ENCODE measurements at regions of chr2 and their contacts with region 1.

Region 1: GRCh38 chr2:29309090-29310029 is 194.1 kb downstream of the CLIP4 start:
- DNase-seq: no peak
- ATAC-seq: peak; percentile 98
- H3K4me3 ChIP-seq: no peak overlapping the region
- H3K27ac ChIP-seq: no peak overlapping the region
- H3K4me1 ChIP-seq: peaks cover 17% of the 10 kb centered on the region
- H3K27me3 ChIP-seq: no peaks in the 10 kb centered on the region
- CTCF ChIP-seq: peak; percentile 79 to 95 (median 83)
- EP300 ChIP-seq: no peak
- POLR2A ChIP-seq: no peak
- RAD21 ChIP-seq: peak; percentile 69

Region 2: DNA sequence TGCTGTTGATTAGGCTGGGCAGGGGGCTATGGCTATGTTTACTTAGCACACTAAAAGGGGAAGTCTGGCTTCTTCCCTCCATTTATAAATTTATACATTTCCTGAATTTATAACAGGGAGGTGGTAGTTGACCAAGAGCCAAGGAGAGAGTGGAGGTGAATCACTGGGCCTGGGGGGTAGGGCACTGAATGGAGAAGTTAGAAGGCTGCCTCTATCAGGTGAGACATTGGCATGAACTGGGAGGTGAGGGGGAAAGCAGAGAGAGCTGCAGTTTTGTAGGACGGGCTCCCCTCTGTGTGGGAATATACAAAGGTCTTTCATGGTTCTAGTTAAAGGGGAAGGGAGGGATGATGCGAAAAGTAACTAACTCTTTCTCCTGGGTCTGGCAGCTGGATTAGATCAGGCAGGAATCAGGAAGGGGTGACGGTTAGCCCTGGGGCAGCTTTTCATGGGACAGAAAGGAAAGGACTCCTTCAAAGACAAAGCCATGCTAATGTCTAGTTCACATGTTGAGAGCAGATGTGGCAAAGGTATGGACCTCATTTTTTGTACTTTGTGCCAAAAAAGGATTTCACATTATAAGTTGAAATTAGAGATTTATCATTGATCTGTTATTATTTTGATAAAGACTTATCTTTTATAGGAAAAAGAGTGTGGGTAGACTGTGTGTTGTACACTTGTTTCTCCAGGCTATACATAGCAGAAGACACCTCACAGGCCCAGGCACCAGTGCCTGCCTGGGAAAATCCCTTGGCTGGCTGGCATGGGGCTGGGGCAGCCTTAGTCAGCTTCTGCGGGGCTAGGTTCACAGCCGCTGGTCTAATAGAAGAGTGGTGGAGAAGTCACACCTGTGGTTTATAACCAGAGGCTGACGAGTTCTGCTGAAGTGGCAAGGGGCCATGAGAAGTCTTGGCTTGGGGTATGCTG is 35.4 kb before region 1 on chr2:
- CTCF ChIA-PET with region 1: no interaction called
- POLR2A ChIA-PET with region 1: no interaction called
- RAD21 ChIA-PET with region 1: no interaction called
- SMC1A ChIA-PET with region 1: no interaction called
- in situ Hi-C with region 1: no loop called
- intact Hi-C with region 1: no loop called
- DNase-seq: no peak
- ATAC-seq: no peak
- H3K4me3 ChIP-seq: no peak overlapping the region
- H3K27ac ChIP-seq: no peak overlapping the region
- H3K4me1 ChIP-seq: no peaks in the 10 kb centered on the region
- H3K27me3 ChIP-seq: peaks cover 4 to 5% of the 10 kb centered on the region in 2 experiments; a peak in 2 of 4 replicates
- CTCF ChIP-seq: no peak
- EP300 ChIP-seq: no peak
- POLR2A ChIP-seq: no peak
- RAD21 ChIP-seq: no peak

Region 3: DNA sequence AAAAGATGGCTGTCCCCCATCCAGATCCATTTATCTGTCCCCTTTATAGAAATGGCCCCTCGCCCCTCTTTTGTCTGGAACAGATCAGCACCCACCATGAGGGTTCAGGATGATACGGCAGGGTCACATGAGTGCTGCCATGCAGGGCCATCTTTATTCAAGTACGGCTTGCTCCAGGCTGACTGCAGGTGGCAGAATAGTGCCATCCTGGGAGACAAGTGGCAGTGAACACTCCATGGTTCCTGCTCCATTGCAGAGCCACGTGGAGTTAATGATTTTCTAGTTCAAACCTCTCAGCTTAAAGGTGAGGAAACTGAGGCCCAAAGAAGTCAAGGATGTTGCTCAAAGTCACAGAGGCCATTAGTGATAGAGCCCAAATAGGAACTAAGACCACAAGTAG is 13.5 kb before region 1 on chr2:
- CTCF ChIA-PET with region 1: interaction called, 12 read pairs
- POLR2A ChIA-PET with region 1: no interaction called
- RAD21 ChIA-PET with region 1: no interaction called
- SMC1A ChIA-PET with region 1: no interaction called
- in situ Hi-C with region 1: no loop called
- intact Hi-C with region 1: no loop called
- DNase-seq: no peak
- ATAC-seq: peak; percentile 46; the same call in 2 of the 3 replicates
- H3K4me3 ChIP-seq: no peak overlapping the region
- H3K27ac ChIP-seq: no peak overlapping the region
- H3K4me1 ChIP-seq: no peaks in the 10 kb centered on the region
- H3K27me3 ChIP-seq: peaks cover 0 to 5% of the 10 kb centered on the region in 2 experiments; a peak in 2 of 4 replicates
- CTCF ChIP-seq: peak; percentile 21 to 44 (median 37); a peak in 5 of 6 replicates
- EP300 ChIP-seq: no peak
- POLR2A ChIP-seq: no peak
- RAD21 ChIP-seq: peak; percentile 37

Region 4: GRCh38 chr2:29583088-29583487 is 273.7 kb after region 1 on chr2:
- CTCF ChIA-PET with region 1: no interaction called
- POLR2A ChIA-PET with region 1: no interaction called
- RAD21 ChIA-PET with region 1: no interaction called
- SMC1A ChIA-PET with region 1: no interaction called
- in situ Hi-C with region 1: no loop called
- intact Hi-C with region 1: loop called (anchors 10 kb)
- DNase-seq: peak; percentile 47
- ATAC-seq: peak; percentile 93
- H3K4me3 ChIP-seq: no peak overlapping the region
- H3K27ac ChIP-seq: no peak overlapping the region
- H3K4me1 ChIP-seq: no peaks in the 10 kb centered on the region
- H3K27me3 ChIP-seq: no peaks in the 10 kb centered on the region; a peak in 2 of 4 replicates
- CTCF ChIP-seq: no peak
- EP300 ChIP-seq: peak in 1 of 2 experiments; percentile 49; a peak in 1 of 4 replicates
- POLR2A ChIP-seq: no peak
- RAD21 ChIP-seq: no peak

Region 5: GRCh38 chr2:29723255-29724001 is 414.1 kb after region 1 on chr2:
- CTCF ChIA-PET with region 1: no interaction called
- POLR2A ChIA-PET with region 1: no interaction called
- RAD21 ChIA-PET with region 1: no interaction called
- SMC1A ChIA-PET with region 1: no interaction called
- in situ Hi-C with region 1: no loop called
- intact Hi-C with region 1: loop called (anchors 10 kb)
- DNase-seq: peak; percentile 37
- ATAC-seq: peak; percentile 92
- H3K4me3 ChIP-seq: no peak overlapping the region
- H3K27ac ChIP-seq: no peak overlapping the region
- H3K4me1 ChIP-seq: no peaks in the 10 kb centered on the region; the same call in 1 of the 2 replicates
- H3K27me3 ChIP-seq: no peaks in the 10 kb centered on the region
- CTCF ChIP-seq: no peak
- EP300 ChIP-seq: peak; percentile 65 to 79; a peak in 3 of 4 replicates
- POLR2A ChIP-seq: no peak
- RAD21 ChIP-seq: no peak

Region 6: GRCh38 chr2:29841386-29842004 is 532.1 kb after region 1 on chr2:
- CTCF ChIA-PET with region 1: interaction called, 26 read pairs
- POLR2A ChIA-PET with region 1: no interaction called
- RAD21 ChIA-PET with region 1: interaction called, 3 read pairs
- SMC1A ChIA-PET with region 1: interaction called, 6 read pairs
- in situ Hi-C with region 1: no loop called
- intact Hi-C with region 1: loop called (anchors 2 kb)
- DNase-seq: peak; percentile 7
- ATAC-seq: peak; percentile 83
- H3K4me3 ChIP-seq: no peak overlapping the region
- H3K27ac ChIP-seq: no peak overlapping the region
- H3K4me1 ChIP-seq: no peaks in the 10 kb centered on the region
- H3K27me3 ChIP-seq: no peaks in the 10 kb centered on the region; a peak in 1 of 4 replicates
- CTCF ChIP-seq: peak; percentile 90 to 92 (median 90)
- EP300 ChIP-seq: no peak
- POLR2A ChIP-seq: no peak
- RAD21 ChIP-seq: peak; percentile 81

Measured in GM12878 (cell line).